ENCODE measurements at regions of chr22 and their contacts with region 1.

Region 1: GRCh38 chr22:30754971-30755756 is 60.5 kb downstream of the OSBP2 start:
- DNase-seq: peak; percentile 54 to 64
- H3K4me3 ChIP-seq: no peak overlapping the region
- H3K27ac ChIP-seq: no peak overlapping the region
- H3K4me1 ChIP-seq: peaks cover 0 to under 1% (median 0%) of the 10 kb centered on the region in 4 experiments; a peak in 2 of 7 replicates
- H3K27me3 ChIP-seq: no peaks in the 10 kb centered on the region
- CTCF ChIP-seq: peak; percentile 74 to 90 (median 80)
- EP300 ChIP-seq: no peak
- POLR2A ChIP-seq: no peak
- RAD21 ChIP-seq: peak; percentile 96 to 98

Region 2: GRCh38 chr22:30556388-30556787 is 198.8 kb before region 1 on chr22:
- CTCF ChIA-PET with region 1: interaction called, 12 read pairs
- POLR2A ChIA-PET with region 1: no interaction called
- DNase-seq: no peak
- H3K4me3 ChIP-seq: no peak overlapping the region
- H3K27ac ChIP-seq: no peak overlapping the region
- H3K4me1 ChIP-seq: peaks cover 0 to 11% (median 4%) of the 10 kb centered on the region in 4 experiments; a peak in 5 of 7 replicates
- H3K27me3 ChIP-seq: no peaks in the 10 kb centered on the region
- CTCF ChIP-seq: peak; percentile 34 to 47 (median 37)
- EP300 ChIP-seq: no peak
- POLR2A ChIP-seq: no peak
- RAD21 ChIP-seq: peak; percentile 50 to 63

Region 3: GRCh38 chr22:30612789-30613188 is 142.4 kb before region 1 on chr22:
- CTCF ChIA-PET with region 1: interaction called, 15 read pairs
- POLR2A ChIA-PET with region 1: no interaction called
- DNase-seq: no peak
- H3K4me3 ChIP-seq: no peak overlapping the region
- H3K27ac ChIP-seq: no peak overlapping the region
- H3K4me1 ChIP-seq: peaks cover 0 to 16% (median 5%) of the 10 kb centered on the region in 4 experiments; a peak in 5 of 7 replicates
- H3K27me3 ChIP-seq: no peaks in the 10 kb centered on the region
- CTCF ChIP-seq: peak; percentile 37 to 44 (median 40); a peak in 3 of 4 replicates
- EP300 ChIP-seq: no peak
- POLR2A ChIP-seq: no peak
- RAD21 ChIP-seq: peak in 1 of 2 experiments; percentile 39; a peak in 2 of 4 replicates

Region 4: DNA sequence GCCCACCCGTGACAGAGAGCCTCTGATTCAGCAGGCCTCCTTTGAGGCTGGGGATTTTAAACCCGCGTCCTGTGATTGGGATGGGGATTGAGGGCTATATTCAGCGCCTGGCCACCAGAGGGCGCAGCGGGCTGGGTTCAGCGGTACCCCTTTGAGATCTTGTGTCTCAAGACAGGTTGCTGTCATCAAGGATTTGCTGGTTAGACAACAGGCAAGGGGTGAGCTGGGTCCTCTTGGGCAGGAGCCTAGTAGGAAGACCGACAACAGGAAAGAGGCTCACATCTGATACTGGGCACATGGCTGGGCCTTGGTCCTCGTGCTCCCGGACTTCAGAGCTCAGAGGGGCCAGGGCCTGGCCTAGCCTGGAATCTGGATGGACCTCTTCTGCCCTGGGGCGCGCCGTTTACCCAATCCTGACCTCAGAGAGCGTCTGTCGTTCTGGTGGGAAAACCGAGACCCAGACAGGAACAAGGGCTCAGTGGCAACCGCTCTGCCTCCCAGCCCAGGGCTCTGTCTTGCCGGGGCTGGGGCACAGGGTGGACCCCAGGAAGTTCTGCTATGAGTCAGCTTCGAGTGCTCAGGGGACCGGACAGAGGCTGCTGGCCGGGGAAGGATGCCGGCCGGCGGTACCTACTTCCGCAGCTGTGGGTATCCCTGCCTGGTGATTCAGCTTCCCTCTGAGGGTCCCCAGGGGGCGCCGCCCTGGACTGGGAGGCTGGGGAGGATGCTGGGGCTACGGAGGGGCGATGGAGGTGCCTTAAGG is 120.5 kb before region 1 on chr22:
- CTCF ChIA-PET with region 1: interaction called, 137 read pairs
- POLR2A ChIA-PET with region 1: interaction called, 12 read pairs
- DNase-seq: peak; percentile 65 to 96
- H3K4me3 ChIP-seq: peak overlapping the region; percentile 34 to 71 (median 44); a peak in 7 of 8 replicates
- H3K27ac ChIP-seq: no peak overlapping the region
- H3K4me1 ChIP-seq: peaks cover 0 to 22% (median 14%) of the 10 kb centered on the region in 4 experiments; a peak in 6 of 7 replicates
- H3K27me3 ChIP-seq: peaks cover 0 to 4% (median 0%) of the 10 kb centered on the region in 4 experiments; a peak in 2 of 7 replicates
- CTCF ChIP-seq: peak; percentile 92 to 98 (median 96)
- EP300 ChIP-seq: no peak
- POLR2A ChIP-seq: no peak
- RAD21 ChIP-seq: peak; percentile 87 to 91

Region 5: DNA sequence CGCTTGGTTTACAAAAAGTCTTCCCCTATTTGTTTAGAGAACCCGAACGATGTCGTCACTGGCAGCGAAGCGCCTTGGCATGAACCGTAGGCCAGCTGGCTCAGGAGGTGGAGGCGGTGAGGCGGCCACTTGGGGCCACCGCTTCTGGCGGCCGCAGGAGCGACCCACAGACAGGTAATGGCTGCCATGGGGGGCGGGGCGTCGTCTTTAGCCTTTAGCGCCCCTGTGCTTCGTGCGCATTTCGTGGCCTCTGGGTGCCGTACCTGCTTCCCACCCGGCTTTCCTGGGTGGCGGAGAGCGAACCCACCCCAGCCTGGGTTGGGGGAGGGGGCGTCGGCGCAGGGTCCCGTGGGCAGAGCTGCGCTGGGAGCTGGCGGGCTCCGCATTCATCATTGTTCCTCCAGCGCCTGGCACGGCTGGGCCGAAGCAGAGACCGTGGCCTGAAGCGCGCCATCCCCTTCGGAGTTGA is 61.0 kb before region 1 on chr22:
- CTCF ChIA-PET with region 1: interaction called, 16 read pairs
- POLR2A ChIA-PET with region 1: no interaction called
- DNase-seq: peak; percentile 13 to 82
- H3K4me3 ChIP-seq: peak overlapping the region; percentile 51 to 73 (median 68)
- H3K27ac ChIP-seq: peak overlapping the region; percentile 54; the same call in 1 of the 2 replicates
- H3K4me1 ChIP-seq: peaks cover 0 to 6% (median 3%) of the 10 kb centered on the region in 4 experiments; a peak in 4 of 7 replicates
- H3K27me3 ChIP-seq: peaks cover 0 to 17% (median 14%) of the 10 kb centered on the region in 4 experiments; a peak in 6 of 7 replicates
- CTCF ChIP-seq: no peak
- EP300 ChIP-seq: no peak
- POLR2A ChIP-seq: peak in 1 of 2 experiments; percentile 41; a peak in 1 of 3 replicates
- RAD21 ChIP-seq: no peak

Region 6: DNA sequence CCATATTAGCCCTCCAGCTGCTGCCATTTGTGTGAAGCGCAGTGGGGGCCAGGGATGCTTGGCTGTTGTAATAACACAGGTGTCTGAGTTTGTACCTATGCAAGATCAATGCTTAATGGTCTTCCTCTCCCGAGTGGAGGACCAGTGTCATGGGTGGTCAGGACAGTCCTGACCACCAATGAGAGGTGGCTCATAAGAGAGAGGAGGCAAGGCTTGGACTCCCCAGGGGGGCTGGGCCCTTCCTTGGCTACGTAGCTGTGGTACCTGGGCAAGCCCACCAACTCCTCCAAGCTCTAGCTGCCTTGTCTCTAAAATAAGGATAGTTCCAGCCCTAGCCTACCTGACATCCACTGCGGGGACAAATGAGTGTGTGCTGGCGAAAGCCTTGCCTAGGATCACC is 18.8 kb after region 1 on chr22:
- CTCF ChIA-PET with region 1: interaction called, 10 read pairs
- POLR2A ChIA-PET with region 1: no interaction called
- DNase-seq: no peak
- H3K4me3 ChIP-seq: no peak overlapping the region
- H3K27ac ChIP-seq: no peak overlapping the region
- H3K4me1 ChIP-seq: no peaks in the 10 kb centered on the region
- H3K27me3 ChIP-seq: no peaks in the 10 kb centered on the region
- CTCF ChIP-seq: no peak
- EP300 ChIP-seq: no peak
- POLR2A ChIP-seq: no peak
- RAD21 ChIP-seq: no peak

Region 7: DNA sequence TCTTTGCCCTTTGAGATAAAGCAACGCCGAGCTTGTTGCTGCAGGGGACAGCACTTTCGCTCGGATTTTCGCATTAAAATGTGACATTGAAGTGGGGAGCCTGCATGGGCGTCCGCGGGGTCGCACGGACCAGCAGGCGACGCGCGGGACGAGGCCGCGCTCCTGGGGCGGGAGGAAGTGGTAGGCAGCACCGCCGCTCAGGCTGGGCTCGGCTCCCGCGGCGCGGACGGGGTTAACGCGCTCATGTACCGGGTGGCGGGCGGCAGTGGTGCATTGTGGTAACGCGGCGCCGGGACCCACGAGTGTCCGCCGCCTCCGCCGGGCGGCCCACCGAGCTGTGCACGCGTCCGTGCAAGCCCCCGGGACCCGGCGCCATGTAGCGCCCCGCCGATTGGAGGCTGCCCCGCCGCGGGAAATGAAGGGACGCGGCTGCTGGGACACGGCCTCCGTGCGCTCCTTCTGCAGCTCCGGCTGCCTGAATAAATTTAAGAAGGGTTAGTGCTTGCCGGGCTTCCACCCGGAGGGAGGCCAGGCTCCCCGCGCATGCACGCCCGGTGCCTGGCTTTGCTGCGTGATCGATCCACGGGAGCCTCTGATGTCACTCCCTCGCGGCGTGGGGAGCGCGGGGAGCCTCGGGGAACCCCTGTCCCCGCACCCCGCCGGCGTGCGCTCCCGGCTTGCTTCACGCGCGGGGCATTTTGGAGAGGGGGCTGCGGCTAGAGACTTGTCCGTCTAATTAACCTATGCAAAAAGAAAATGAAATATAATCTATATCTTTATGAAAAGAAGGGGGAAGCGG is 67.3 kb after region 1 on chr22:
- CTCF ChIA-PET with region 1: no interaction called
- POLR2A ChIA-PET with region 1: no interaction called
- DNase-seq: peak in 1 of 2 experiments; percentile 66
- H3K4me3 ChIP-seq: peak overlapping the region; percentile 38 to 70 (median 50)
- H3K27ac ChIP-seq: no peak overlapping the region
- H3K4me1 ChIP-seq: peaks cover 0 to 3% (median 0%) of the 10 kb centered on the region in 4 experiments; a peak in 2 of 7 replicates
- H3K27me3 ChIP-seq: peaks cover 2 to 35% (median 24%) of the 10 kb centered on the region in 4 experiments
- CTCF ChIP-seq: no peak
- EP300 ChIP-seq: no peak
- POLR2A ChIP-seq: no peak
- RAD21 ChIP-seq: no peak

Measured in H1 (cell line).